SK-N-SH (cell line): ENCODE measurements at regions of chr5 and their contacts with region 1.

Region 1: DNA sequence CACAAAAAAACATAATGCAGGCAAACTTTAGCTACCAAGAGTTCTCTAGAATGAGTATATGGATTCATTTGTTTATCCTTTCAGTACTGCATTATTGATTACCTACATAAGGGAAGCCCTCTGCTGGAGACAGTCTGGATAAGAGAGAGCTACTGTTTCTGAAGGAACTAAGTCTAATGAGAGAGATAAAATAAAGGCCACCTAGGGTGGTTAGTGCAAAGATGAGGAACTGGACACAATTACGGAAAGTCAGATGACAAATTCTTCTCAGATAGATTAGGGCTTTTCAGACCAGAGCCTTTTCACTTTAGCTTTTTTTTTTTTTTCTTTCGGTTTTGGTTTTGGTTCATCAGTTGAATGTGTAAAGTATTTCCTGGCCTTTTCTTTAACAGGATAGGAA is 31.3 kb downstream of the ISOC1 start:
- DNase-seq: no peak
- H3K4me3 ChIP-seq: no peak overlapping the region
- H3K27ac ChIP-seq: no peak overlapping the region
- H3K4me1 ChIP-seq: peaks cover 0 to 10% of the 10 kb centered on the region in 2 experiments; a peak in 2 of 4 replicates
- H3K27me3 ChIP-seq: no peaks in the 10 kb centered on the region
- CTCF ChIP-seq: no peak
- EP300 ChIP-seq: no peak
- RAD21 ChIP-seq: no peak

Region 2: DNA sequence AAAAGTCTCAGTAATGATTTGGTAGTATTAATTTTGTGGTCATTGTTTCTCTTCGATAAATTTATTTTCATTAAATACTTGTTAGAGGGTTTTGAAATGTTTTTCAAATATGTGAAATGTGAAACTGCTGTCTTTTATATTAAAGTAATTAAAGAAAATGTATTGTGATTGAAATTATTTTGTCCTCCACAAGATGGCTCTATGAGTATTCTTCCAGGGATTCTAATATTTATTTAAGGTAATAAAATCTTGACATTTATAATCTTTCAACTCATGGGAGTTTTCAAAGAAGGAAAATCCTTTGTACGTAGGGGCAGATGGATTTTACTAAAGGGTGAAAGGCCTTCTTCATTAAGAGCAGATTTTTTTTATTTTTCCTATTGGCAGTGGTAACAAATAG is 11.9 kb before region 1 on chr5:
- CTCF ChIA-PET with region 1: interaction called, 19 read pairs
- POLR2A ChIA-PET with region 1: no interaction called
- DNase-seq: no peak
- H3K4me3 ChIP-seq: no peak overlapping the region
- H3K27ac ChIP-seq: no peak overlapping the region
- H3K4me1 ChIP-seq: peaks cover 0 to 16% of the 10 kb centered on the region in 2 experiments; a peak in 2 of 4 replicates
- H3K27me3 ChIP-seq: no peaks in the 10 kb centered on the region
- CTCF ChIP-seq: peak; percentile 40
- EP300 ChIP-seq: no peak
- RAD21 ChIP-seq: no peak; the same call in 1 of the 2 replicates